ENCODE measurements at regions of chr14 and their contacts with region 1.

Region 1: DNA sequence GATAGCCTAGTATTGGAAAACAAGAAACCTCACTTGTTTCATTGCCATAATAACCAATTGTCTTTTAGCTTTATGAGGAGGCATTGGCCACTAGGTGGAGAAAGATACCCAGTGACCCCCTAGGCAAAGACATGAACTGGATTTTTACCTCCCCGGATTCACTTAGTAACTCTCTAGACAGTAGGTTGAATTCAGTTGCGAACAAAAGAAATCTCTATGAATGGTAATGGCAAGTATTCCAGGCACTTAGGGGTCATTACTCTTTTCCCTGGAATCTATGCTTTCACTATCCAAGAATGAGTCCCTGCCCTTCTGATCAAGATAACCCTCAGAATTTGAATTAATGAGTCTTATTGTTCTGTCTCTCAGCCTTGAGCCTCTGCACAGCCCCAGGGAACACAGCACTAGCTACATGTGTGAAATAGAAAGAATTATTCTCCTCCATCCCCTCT is 29.5 kb upstream of the RHOJ start:
- DNase-seq: no peak
- H3K4me3 ChIP-seq: no peak overlapping the region
- CTCF ChIP-seq: no peak
- POLR2A ChIP-seq: no peak

Region 2: DNA sequence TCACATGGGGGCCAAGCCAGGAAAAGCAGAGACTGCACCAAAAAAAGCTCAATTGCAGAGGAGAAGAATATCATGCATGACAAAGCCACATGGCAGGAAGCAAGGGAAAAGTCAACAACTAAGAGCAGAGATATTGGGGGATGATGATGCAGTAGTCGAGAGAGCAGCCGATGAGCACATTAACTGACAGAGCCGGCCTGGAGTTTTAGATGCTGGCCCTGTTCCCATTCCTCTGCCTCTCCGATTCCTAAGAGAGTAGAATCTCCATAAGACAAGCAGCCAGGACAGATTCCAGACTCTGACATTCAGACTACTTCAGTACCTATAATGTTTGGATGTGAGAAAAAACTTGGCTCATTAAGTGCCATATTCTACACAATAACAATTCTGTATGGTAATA is 285.4 kb before region 1 on chr14:
- intact Hi-C with region 1: no loop called
- DNase-seq: no peak
- H3K4me3 ChIP-seq: no peak overlapping the region
- CTCF ChIP-seq: no peak
- POLR2A ChIP-seq: no peak

Region 3: DNA sequence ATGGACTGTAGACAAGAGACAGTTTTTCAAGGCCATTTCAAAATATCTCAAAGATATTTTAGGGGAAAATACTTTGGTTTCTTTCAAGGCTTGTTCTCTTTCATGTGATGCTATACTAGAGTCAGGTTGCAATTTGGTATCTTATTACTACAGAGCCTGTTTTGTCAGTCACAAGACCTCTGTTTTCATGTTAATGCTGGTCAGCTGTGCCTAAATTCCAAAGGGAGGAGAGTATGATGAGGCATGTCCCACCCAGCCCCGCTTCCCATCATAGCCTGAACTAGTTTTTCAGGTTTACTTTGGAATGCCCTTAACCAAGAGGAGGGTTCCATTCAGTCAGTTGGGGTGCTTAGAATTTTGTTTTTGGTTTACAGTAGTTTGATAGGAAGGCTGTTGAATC is 91.3 kb after region 1 on chr14:
- intact Hi-C with region 1: loop called (anchors 10 kb)
- DNase-seq: no peak
- H3K4me3 ChIP-seq: no peak overlapping the region
- CTCF ChIP-seq: no peak
- POLR2A ChIP-seq: no peak